H1 (cell line): ENCODE measurements at regions of chr17 and their contacts with region 1.

Region 1: GRCh38 chr17:50297407-50297865 is 23.2 kb downstream of the TMEM92 start:
- DNase-seq: peak; percentile 50 to 93
- H3K4me3 ChIP-seq: no peak overlapping the region
- H3K27ac ChIP-seq: no peak overlapping the region
- H3K4me1 ChIP-seq: peaks cover 0 to 4% (median under 1%) of the 10 kb centered on the region in 4 experiments; a peak in 2 of 7 replicates
- H3K27me3 ChIP-seq: no peaks in the 10 kb centered on the region
- CTCF ChIP-seq: peak; percentile 93 to 96 (median 94)
- EP300 ChIP-seq: no peak
- POLR2A ChIP-seq: no peak
- RAD21 ChIP-seq: peak; percentile 99 to 100

Region 2: DNA sequence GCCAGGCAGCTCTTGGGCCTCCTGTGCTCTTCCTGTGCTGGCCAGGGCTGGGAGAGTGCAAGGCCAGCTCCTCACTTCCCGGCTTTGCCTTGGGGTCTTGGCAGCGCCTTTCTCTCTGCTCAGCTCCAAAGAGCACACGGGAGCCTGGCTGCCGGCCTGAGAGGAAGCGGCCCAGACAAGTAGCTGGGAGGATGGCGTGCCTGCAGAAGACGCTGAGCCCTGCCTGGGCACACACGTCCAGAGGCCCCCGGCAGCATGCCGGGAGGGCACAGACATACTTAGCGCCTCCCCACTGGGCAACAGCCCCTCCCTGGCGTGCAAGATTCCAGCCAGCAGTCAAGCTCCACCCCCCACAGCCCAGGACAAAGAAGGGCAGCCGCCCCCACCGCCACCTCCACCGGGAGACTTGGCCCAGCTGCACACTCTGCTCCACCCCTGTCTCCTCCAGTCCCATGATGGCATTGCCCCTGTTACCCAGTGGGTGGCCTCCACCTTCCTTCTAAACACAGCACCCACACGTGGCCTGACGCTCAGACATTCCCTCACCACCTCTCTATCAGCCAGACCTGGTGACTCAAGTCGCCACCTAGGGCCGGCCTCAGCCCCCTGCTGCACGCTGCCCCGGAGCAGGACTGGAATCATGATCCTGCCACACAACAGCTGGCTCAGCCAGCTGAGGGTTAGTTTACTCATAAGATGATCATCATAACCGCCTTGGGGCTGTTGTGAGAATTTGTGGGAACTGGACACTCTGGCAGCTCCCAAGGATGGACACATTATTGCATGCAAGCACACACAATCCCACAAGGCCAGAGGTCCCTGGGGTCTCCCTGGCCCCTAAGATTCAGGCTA is 119.2 kb before region 1 on chr17:
- CTCF ChIA-PET with region 1: interaction called, 299 read pairs
- POLR2A ChIA-PET with region 1: interaction called, 3 read pairs
- DNase-seq: peak; percentile 39 to 80
- H3K4me3 ChIP-seq: peak overlapping the region in 3 of 4 experiments; percentile 17 to 42 (median 24); a peak in 3 of 8 replicates
- H3K27ac ChIP-seq: no peak overlapping the region
- H3K4me1 ChIP-seq: peaks cover 4 to 22% (median 15%) of the 10 kb centered on the region in 4 experiments
- H3K27me3 ChIP-seq: no peaks in the 10 kb centered on the region
- CTCF ChIP-seq: peak; percentile 50 to 60 (median 57)
- EP300 ChIP-seq: no peak
- POLR2A ChIP-seq: peak in 1 of 2 experiments; percentile 45; a peak in 1 of 3 replicates
- RAD21 ChIP-seq: peak in 1 of 2 experiments; percentile 24; a peak in 1 of 4 replicates

Region 3: GRCh38 chr17:50283246-50283645 is 14.2 kb before region 1 on chr17:
- CTCF ChIA-PET with region 1: interaction called, 316 read pairs
- POLR2A ChIA-PET with region 1: no interaction called
- DNase-seq: no peak
- H3K4me3 ChIP-seq: no peak overlapping the region
- H3K27ac ChIP-seq: no peak overlapping the region
- H3K4me1 ChIP-seq: peaks cover 3 to 17% (median 9%) of the 10 kb centered on the region in 4 experiments; a peak in 6 of 7 replicates
- H3K27me3 ChIP-seq: no peaks in the 10 kb centered on the region
- CTCF ChIP-seq: no peak
- EP300 ChIP-seq: no peak
- POLR2A ChIP-seq: no peak
- RAD21 ChIP-seq: no peak

Region 4: DNA sequence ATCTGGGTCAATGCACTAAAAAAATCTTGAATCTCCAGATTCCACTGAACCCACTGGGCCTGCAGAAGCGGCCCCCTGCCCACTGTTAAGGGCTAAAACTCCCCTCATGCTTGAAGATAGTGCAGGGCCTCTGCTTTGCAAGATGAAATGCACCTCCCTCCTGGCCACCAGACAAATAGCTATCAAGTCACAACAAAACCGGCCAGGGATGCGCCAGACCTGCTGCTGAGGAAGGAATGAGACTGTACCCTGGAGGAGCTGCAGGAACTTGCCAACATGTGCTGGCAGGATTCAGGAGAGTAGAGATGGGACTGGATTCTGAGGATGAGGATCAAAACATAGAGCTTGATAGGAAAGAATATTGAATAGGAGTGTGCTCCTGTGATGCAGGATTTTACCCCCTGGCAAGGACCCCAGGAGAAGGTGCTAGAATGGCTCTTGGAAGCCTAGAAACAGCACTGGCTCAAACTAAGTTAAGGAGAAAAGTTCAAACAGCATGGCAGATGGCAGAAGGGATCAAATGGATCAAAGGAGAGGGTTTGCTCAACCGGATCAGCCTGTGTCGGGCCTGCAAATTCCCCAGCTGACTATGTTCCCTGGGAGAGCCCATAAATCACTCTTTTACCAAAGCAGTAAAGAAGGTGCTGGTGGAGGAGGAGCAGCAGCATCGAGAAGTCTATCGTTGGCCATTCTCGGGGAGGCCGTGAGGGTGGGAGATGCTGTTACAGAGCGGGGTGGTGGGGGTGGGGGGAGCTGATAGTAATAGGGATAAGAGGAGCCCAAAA is 21.3 kb after region 1 on chr17:
- CTCF ChIA-PET with region 1: interaction called, 21 read pairs
- POLR2A ChIA-PET with region 1: no interaction called
- DNase-seq: no peak
- H3K4me3 ChIP-seq: no peak overlapping the region
- H3K27ac ChIP-seq: no peak overlapping the region
- H3K4me1 ChIP-seq: peaks cover 0 to 4% (median 0%) of the 10 kb centered on the region in 4 experiments; a peak in 3 of 7 replicates
- H3K27me3 ChIP-seq: no peaks in the 10 kb centered on the region; a peak in 1 of 7 replicates
- CTCF ChIP-seq: no peak
- EP300 ChIP-seq: no peak
- POLR2A ChIP-seq: no peak
- RAD21 ChIP-seq: no peak

Region 5: GRCh38 chr17:50406578-50406977 is 109.1 kb after region 1 on chr17:
- CTCF ChIA-PET with region 1: no interaction called
- POLR2A ChIA-PET with region 1: no interaction called
- DNase-seq: no peak
- H3K4me3 ChIP-seq: no peak overlapping the region
- H3K27ac ChIP-seq: no peak overlapping the region
- H3K4me1 ChIP-seq: peaks cover 0 to 5% (median 0%) of the 10 kb centered on the region in 4 experiments; a peak in 1 of 7 replicates
- H3K27me3 ChIP-seq: no peaks in the 10 kb centered on the region; a peak in 2 of 7 replicates
- CTCF ChIP-seq: no peak
- EP300 ChIP-seq: no peak
- POLR2A ChIP-seq: no peak
- RAD21 ChIP-seq: no peak